Uterus (tissue), 4 donors: ENCODE measurements at regions of chr2 and their contacts with region 1.

Region 1: GRCh38 chr2:64767670-64768468 is 114.2 kb upstream of the SERTAD2 start:
- DNase-seq: peak; percentile 90 to 95
- H3K4me3 ChIP-seq: peak overlapping the region; percentile 72 to 76
- H3K27ac ChIP-seq: peak overlapping the region; percentile 99
- H3K4me1 ChIP-seq: peaks cover 4 to 7% of the 10 kb centered on the region in 2 donors
- H3K27me3 ChIP-seq: no peaks in the 10 kb centered on the region
- CTCF ChIP-seq: peak in 3 of 4 experiments; percentile 4 to 11 (median 7)
- POLR2A ChIP-seq: peak; percentile 81 to 89

Region 2: GRCh38 chr2:64653349-64654062 is 114.4 kb before region 1 on chr2 and contains the start of gene SERTAD2:
- intact Hi-C with region 1: loop called (anchors 10 kb)
- DNase-seq: peak; percentile 88 to 89
- H3K4me3 ChIP-seq: peak within 1 kb of the TSS; percentile 94 to 98
- H3K27ac ChIP-seq: peak within 1 kb of the TSS; percentile 98 to 100
- H3K4me1 ChIP-seq: no peaks in the 10 kb centered on the region
- H3K27me3 ChIP-seq: no peaks in the 10 kb centered on the region
- CTCF ChIP-seq: peak in 2 of 4 experiments; percentile 2 to 5
- POLR2A ChIP-seq: peak in 1 of 2 donors; percentile 89
- total RNA-seq, gene SERTAD2: 1.8 to 29.5 (median 8.9) TPM